Posterior vena cava (tissue), 2 donors: ENCODE measurements at regions of chrX and their contacts with region 1.

Region 1: GRCh38 chrX:150990890-150991289 is 7.8 kb downstream of the HMGB3 start:
- DNase-seq: no peak

Region 2: DNA sequence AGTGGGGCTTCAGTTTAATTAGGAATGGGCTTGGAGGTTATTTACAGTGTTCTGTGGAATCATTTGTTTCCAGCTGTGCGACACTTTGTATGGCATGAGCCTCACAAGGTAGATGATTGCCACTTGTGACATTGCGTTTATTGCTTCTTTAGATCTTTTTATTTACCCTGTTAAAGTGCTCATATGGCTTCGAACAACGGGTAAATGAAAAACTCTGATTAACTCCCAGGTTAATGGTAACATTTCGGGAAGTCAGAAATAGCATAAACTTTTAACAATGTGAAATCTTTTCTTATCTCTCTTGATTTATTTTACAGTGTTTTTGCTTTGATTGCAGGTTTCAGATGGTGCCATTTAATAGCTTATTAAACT is 1980.1 kb before region 1 on chrX:
- intact Hi-C with region 1: no loop called
- DNase-seq: no peak

Region 3: DNA sequence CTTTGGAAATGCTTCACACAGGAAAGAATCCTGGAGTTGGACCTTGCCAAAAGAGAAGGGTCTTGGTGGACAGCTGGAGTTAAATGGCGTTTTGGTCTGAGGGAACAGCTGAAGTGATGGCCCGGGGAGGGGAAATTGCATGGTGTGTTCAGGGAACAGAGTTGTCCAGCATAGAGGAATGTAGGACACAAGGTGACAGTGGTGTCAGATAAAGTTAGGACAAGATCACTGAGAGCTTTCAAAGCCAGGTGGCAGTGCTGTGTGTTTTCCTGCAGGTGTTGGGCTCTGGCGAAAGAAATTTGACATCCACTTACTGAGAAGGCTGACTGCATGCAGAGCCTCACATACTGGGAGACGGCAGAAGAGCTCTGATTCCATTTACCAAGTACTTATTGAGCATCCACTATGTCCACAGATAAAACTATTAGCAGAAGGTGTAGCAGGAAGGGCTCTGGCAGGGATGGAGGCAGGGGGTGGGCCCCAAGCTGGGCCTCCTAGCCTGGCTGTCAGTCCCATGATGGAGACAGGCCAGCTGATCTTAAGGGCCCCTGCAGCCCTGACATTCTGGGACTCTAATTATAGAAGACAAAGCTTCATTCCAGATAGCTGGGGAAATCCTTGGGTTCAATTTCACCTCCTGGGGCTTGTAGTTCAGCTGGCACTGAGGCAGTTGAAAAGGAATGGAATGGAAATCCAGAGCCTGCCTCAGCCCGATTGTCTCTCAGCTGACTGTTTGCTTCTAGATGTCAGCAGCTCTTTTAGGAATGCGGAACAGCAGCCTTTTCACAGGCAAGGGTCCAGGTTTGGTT is 778.0 kb before region 1 on chrX:
- intact Hi-C with region 1: loop called in 1 of 2 experiments (anchors 5 kb)
- DNase-seq: peak; percentile 70

Region 4: DNA sequence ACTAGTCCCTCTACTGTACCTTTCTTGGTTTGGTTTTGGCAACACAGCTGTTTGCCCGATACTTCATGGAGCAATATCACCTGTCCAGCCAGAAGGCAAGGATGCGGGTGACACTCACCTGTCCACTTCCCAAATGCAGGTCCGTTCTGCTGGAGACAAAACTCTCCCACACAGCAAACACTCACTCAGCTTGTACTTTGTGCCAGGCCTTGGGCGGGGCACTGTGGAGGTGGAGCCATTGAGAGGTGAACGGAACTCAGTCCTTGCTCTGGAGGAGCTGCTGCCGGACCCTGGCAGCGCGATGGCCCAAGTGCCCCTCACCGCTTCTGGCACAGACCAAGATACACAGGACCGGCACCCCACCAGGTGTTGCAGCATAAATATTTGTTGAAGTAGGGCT is 23.1 kb before region 1 on chrX:
- intact Hi-C with region 1: no loop called
- DNase-seq: peak; percentile 60

Region 5: DNA sequence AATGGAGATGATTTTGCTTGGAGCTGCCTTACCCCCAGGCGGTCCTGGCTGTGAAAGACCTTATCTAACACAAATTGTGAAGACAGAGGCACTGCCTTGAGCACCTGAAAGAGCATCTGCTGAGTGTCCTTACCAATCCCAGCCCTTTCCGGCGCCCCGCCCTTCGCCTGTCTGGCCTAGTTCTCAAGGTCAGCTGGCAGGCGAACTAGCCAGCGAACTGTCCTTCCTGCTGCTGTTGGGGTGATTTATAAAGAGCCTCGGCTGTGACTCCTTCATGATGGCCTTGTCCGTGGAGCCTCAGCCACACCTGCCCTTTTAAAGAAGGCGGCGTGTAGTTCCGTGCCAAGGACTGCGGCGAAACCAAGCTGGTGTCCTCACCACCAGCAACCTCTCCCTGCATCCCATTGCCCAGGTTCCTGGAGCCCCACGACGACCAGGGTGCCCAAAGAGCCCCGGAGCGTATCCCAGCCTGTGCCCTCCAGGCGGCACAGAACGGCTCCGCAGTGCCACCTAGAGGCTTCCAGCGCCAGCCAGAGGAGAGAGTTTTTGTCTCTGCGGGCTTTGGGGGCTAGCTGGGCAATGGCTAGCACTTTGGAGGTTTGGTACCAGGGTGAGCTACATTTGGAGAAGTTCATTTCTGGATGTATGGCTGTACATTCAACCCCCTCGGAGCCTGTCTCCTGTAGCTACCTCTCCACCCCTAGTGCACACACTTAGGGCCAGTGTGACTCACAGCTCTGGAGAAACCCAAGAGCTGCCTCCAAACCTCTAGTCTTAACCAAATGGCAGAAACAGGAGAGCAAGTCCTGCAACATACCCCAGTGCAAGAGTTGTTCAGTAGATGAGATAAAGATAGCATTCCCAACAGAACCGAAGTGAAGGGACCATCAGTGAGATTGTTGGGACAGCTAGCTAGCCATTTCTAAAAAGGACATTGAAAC is 369.3 kb after region 1 on chrX:
- intact Hi-C with region 1: no loop called
- DNase-seq: no peak

Region 6: GRCh38 chrX:151896734-151897474 is 906.0 kb after region 1 on chrX:
- intact Hi-C with region 1: no loop called
- DNase-seq: no peak